HEK293 (cell line): ENCODE measurements at regions of chr17 and their contacts with region 1.

Region 1: GRCh38 chr17:40121181-40122135 is at the start of gene MSL1:
- H3K4me3 ChIP-seq: peak within 1 kb of the TSS; percentile 72
- H3K27ac ChIP-seq: peak within 1 kb of the TSS; percentile 95
- H3K4me1 ChIP-seq: no peaks in the 10 kb centered on the region; the same call in none of the 2 replicates
- CTCF ChIP-seq: no peak

Region 2: DNA sequence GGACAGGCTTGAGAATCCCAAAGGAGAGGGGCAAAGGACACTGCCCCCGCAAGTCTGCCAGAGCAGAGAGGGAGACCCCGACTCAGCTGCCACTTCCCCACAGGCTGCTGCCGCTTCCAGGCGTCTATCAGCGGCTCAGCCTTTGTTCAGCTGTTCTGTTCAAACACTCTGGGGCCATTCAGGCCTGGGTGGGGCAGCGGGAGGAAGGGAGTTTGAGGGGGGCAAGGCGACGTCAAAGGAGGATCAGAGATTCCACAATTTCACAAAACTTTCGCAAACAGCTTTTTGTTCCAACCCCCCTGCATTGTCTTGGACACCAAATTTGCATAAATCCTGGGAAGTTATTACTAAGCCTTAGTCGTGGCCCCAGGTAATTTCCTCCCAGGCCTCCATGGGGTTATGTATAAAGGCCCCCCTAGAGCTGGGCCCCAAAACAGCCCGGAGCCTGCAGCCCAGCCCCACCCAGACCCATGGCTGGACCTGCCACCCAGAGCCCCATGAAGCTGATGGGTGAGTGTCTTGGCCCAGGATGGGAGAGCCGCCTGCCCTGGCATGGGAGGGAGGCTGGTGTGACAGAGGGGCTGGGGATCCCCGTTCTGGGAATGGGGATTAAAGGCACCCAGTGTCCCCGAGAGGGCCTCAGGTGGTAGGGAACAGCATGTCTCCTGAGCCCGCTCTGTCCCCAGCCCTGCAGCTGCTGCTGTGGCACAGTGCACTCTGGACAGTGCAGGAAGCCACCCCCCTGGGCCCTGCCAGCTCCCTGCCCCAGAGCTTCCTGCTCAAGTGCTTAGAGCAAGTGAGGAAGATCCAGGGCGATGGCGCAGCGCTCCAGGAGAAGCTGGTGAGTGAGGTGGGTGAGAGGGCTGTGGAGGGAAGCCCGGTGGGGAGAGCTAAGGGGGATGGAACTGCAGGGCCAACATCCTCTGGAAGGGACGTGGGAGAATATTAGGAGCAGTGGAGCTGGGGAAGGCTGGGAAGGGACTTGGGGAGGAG is 106.2 kb before region 1 on chr17 and contains the start of gene CSF3:
- CTCF ChIA-PET with region 1: interaction called, 11 read pairs
- POLR2A ChIA-PET with region 1: no interaction called
- H3K4me3 ChIP-seq: no peak within 1 kb of the TSS
- H3K27ac ChIP-seq: no peak within 1 kb of the TSS
- H3K4me1 ChIP-seq: no peaks in the 10 kb centered on the region
- CTCF ChIP-seq: no peak

Region 3: GRCh38 chr17:40134184-40134583 is 12.7 kb after region 1 on chr17:
- CTCF ChIA-PET with region 1: interaction called, 4 read pairs
- POLR2A ChIA-PET with region 1: interaction called, 109 read pairs
- H3K4me3 ChIP-seq: no peak overlapping the region
- H3K27ac ChIP-seq: no peak overlapping the region
- H3K4me1 ChIP-seq: peaks cover under 1% of the 10 kb centered on the region; the same call in 1 of the 2 replicates
- CTCF ChIP-seq: no peak

Region 4: GRCh38 chr17:40139566-40140058 is 18.2 kb after region 1 on chr17:
- CTCF ChIA-PET with region 1: interaction called, 4 read pairs
- POLR2A ChIA-PET with region 1: interaction called, 109 read pairs
- H3K4me3 ChIP-seq: peak overlapping the region; percentile 37
- H3K27ac ChIP-seq: peak overlapping the region; percentile 85
- H3K4me1 ChIP-seq: peaks cover 8% of the 10 kb centered on the region
- CTCF ChIP-seq: no peak

Region 5: GRCh38 chr17:40387680-40388079 is 266.2 kb after region 1 on chr17:
- CTCF ChIA-PET with region 1: no interaction called
- POLR2A ChIA-PET with region 1: no interaction called
- H3K4me3 ChIP-seq: no peak overlapping the region
- H3K27ac ChIP-seq: no peak overlapping the region
- H3K4me1 ChIP-seq: no peaks in the 10 kb centered on the region
- CTCF ChIP-seq: no peak